GM10248 (cell line): ENCODE measurements at regions of chr17 and their contacts with region 1.

Region 1: GRCh38 chr17:3913531-3914311 is 2.5 kb downstream of the P2RX1 start:
- DNase-seq: peak; percentile 89
- CTCF ChIP-seq: peak; percentile 99

Region 2: DNA sequence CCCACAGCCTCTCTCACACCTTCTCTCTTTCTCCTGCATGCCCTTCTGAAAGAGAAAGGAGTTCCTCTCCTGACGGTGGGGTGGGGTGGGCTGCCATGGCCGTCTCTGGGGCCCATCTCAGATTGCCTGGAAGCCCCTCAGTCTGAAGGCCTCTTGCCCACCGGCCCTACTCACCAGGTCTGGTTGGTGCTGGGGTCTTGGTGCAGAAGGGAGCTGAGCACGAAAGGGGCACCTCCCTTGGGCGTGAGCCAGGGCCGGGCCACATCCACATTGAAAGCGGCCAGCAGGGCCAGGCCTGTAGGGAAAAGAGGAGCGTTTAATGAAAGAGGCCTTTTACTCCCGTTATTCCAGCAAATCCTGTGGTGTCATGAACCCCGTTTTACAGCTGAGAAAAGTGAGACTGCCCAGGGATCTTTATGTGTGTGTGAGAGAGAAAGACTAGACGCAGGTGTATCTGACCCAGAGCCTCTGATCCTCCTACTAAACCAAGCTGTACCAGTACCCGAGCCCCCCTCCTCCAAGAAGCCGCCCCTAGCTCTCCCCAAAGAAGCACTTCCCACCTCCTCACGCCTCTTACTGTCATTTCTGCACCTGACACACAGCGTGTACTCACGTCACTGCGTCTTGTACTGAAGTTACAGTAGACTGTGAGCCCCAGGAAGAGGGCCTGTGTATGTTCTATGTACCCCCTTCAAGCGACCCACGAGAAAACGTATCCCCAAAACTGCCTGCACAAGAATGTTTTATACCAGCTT is 136.2 kb before region 1 on chr17:
- CTCF ChIA-PET with region 1: no interaction called
- POLR2A ChIA-PET with region 1: no interaction called
- DNase-seq: no peak
- CTCF ChIP-seq: no peak

Region 3: DNA sequence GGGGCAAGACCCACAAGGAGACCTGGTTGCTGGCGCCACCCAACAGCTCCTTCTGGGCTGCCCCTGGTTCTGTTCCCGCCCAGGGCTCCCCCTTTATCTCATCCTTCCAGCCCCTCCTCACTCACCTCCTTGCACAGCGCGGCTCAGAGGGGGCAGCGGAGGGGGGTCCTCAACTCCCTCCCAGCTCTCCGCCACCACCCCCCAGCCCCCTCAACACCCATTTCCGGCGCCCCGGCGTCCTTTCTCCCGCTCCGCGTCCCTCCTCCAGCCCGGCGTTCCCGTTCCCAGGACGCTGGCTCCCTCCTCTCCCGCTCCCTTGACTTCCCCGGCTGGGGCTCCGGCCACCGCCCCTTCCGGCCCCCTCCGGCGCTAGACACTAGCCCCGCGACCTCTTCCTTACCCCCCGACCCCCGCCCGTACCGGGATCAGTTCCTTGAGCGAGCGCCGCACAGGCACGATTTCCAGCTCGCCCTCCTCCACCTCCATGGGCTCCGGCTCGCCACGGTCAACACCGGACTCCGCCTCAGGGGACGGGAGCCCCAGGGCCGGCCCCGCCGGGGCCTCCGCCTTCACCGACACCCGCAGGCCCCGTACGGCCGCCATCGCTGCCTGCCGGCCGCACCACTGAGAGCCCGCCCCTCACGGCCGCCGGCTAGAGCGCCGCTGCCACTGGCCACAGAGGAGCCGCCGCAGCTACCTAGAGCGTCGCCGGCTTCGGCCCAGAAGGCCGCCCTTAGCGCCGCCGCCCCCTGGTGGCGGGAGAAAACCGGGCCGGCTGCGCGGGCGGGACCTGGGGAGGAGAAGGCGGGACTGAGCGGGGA is 67.9 kb before region 1 on chr17 and contains the start of gene NCBP3:
- CTCF ChIA-PET with region 1: interaction called, 18 read pairs
- POLR2A ChIA-PET with region 1: interaction called, 3 read pairs
- DNase-seq: peak; percentile 98
- CTCF ChIP-seq: peak; percentile 94

Region 4: GRCh38 chr17:3865176-3865575 is 48.5 kb before region 1 on chr17:
- CTCF ChIA-PET with region 1: interaction called, 17 read pairs
- POLR2A ChIA-PET with region 1: no interaction called
- DNase-seq: no peak
- CTCF ChIP-seq: no peak

Region 5: GRCh38 chr17:3959295-3959925 is 45.7 kb after region 1 on chr17:
- CTCF ChIA-PET with region 1: interaction called, 22 read pairs
- POLR2A ChIA-PET with region 1: no interaction called
- DNase-seq: no peak
- CTCF ChIP-seq: no peak

Region 6: GRCh38 chr17:4004517-4005295 is 91.0 kb after region 1 on chr17:
- CTCF ChIA-PET with region 1: interaction called, 74 read pairs
- POLR2A ChIA-PET with region 1: no interaction called
- DNase-seq: peak; percentile 88
- CTCF ChIP-seq: peak; percentile 91

Region 7: GRCh38 chr17:4074831-4075495 is 161.2 kb after region 1 on chr17:
- CTCF ChIA-PET with region 1: interaction called, 68 read pairs
- POLR2A ChIA-PET with region 1: no interaction called
- DNase-seq: peak; percentile 56
- CTCF ChIP-seq: peak; percentile 74